ENCODE measurements at regions of chr7 and their contacts with region 1.

Region 1: GRCh38 chr7:73738612-73739374 is at the start of gene ABHD11:
- DNase-seq: peak; percentile 98
- H3K4me3 Mint-ChIP-seq: peak within 1 kb of the TSS; percentile 97
- H3K27ac Mint-ChIP-seq: peak within 1 kb of the TSS; percentile 90
- H3K4me1 Mint-ChIP-seq: peaks cover 14% of the 10 kb centered on the region
- H3K27me3 Mint-ChIP-seq: no peaks in the 10 kb centered on the region
- total RNA-seq, gene ABHD11: 9.4 to 11.3 TPM

Region 2: GRCh38 chr7:73522105-73522872 is 216.5 kb before region 1 on chr7 and contains the start of gene BAZ1B:
- CTCF ChIA-PET with region 1: interaction called, 3 read pairs
- intact Hi-C with region 1: loop called (anchors 1 kb)
- DNase-seq: peak; percentile 99
- H3K4me3 Mint-ChIP-seq: peak within 1 kb of the TSS; percentile 98
- H3K27ac Mint-ChIP-seq: peak within 1 kb of the TSS; percentile 96
- H3K4me1 Mint-ChIP-seq: peaks cover 55% of the 10 kb centered on the region
- H3K27me3 Mint-ChIP-seq: no peaks in the 10 kb centered on the region
- total RNA-seq, gene BAZ1B: 67.6 to 69.9 TPM

Region 3: DNA sequence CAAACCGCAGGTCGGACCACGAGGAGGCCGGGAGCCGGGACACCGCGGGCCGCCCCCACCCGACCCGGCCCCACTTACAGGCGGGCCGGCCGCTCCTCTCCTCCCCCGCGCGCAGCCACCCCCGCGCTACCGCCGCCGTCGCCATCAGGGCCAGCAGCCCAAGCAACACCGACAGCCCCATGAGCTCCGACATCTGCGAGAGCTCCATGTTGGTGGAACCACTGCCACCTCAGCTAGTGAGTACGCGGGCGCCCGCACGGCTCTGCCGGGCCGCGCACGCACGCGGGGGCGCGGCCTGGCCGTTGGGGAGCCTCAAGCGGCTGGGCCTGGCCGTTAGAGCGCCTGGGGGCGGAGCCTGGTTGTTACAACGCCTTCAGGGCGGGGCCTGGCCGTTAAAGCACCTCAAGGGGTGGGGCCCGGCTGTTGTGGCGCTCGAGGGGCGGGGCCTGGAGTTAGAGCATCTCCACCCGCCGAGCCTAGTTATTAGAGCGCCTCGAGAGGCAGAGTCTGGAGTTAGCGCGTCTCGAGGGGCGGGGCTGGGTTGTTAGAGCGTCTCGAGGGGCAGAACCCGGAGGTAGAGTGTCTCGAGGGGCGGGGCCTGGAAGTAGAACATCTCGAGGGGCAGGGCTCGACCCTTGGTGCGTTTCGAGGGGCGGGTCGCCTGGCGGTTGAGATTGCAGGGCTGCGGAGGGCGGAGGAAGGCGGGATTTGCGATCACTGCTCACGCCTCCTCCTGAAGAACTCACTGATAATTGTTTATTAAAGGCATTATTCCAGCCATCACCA is 160.3 kb before region 1 on chr7 and contains the start of gene TBL2:
- CTCF ChIA-PET with region 1: interaction called, 3 read pairs
- intact Hi-C with region 1: loop called (anchors 1 kb)
- DNase-seq: peak; percentile 99
- H3K4me3 Mint-ChIP-seq: peak within 1 kb of the TSS; percentile 87
- H3K27ac Mint-ChIP-seq: peak within 1 kb of the TSS; percentile 94
- H3K4me1 Mint-ChIP-seq: peaks cover 32% of the 10 kb centered on the region
- H3K27me3 Mint-ChIP-seq: no peaks in the 10 kb centered on the region
- total RNA-seq, gene TBL2: 21.5 to 23.6 TPM

Region 4: DNA sequence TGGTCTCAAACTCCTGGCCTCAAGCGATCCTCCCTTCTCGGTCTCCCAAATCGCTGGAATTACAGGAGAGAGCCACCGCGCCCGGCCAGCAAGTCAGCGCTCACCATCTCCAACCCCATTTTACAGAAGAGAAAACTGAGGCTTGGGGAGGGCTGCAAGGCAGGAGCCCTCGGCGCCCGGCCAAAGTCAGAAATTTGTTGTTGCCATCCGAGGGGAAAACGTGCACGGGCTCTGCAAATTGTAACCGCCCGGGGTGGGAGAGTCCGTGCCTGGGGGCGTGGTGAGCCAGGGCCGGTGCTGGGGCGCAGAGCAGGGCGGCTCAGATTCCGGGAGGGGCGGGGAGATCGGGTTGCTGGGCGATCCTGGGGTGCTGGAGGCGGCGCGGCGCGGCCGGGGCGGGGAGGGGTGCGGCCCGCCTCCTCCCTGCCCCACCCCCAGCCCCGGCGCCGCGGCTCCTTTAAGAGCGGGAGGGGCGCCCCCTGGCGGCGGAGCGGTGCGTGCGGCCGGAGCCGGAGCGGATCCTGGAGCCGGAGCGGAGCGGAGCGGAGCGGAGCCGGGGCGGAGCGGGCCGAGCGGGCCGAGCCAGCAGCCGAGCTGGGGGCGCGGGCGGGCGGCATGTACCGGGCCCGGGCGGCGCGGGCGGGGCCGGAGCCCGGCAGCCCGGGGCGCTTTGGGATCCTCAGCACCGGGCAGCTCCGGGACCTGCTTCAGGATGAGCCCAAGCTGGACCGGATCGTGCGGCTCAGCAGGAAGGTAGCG is 71.3 kb before region 1 on chr7 and contains the start of gene VPS37D:
- CTCF ChIA-PET with region 1: no interaction called
- intact Hi-C with region 1: loop called (anchors 1 kb)
- DNase-seq: peak; percentile 91
- H3K4me3 Mint-ChIP-seq: peak within 1 kb of the TSS; percentile 63
- H3K27ac Mint-ChIP-seq: no peak within 1 kb of the TSS
- H3K4me1 Mint-ChIP-seq: peaks cover 8% of the 10 kb centered on the region
- H3K27me3 Mint-ChIP-seq: peaks cover 34% of the 10 kb centered on the region
- total RNA-seq, gene VPS37D: not detected

Region 5: DNA sequence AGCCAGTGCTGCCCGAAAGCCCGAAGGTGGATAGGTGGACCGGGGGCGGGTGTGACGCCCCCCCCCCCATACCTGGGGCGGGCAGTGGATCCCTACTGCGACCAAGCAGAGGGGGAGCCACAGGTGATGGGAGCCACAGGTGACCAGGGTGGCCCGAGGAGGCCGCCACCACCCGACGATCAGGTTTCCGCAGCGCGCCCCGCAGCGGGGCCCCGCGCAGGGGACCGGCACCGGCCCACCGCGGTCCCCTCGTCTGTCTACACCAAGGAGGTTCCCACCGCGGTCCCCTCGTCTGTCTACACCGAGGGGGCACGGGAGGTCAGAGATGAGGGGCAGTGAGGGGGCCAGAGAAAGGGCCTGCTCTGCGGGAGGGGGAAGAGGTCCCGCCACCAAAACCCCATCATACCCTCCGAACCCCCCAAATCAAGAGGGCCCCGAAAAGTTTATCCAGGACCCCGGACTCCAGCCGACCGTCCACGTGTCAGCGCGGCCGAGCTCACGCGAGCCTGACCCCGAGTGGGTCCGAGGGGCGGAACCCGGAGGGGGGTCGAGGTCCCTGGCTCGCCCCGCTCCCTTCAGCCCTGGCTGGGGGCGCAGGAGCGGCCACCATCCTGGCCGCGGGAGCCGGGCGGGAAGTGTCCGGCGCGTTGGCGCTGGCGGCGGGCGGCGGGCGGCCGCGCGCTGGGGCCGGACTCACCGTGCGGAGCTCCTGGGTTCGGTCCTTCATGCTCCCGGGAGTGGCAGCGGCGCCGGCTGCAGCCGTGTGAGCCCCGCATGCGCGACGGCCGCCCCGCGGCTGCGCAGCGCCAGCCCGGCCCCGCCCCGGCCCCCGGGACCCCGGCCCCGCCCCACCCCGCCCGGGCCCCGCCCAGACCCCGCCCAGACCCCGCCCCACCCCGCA is 19.6 kb before region 1 on chr7 and contains the start of gene STX1A:
- CTCF ChIA-PET with region 1: interaction called, 4 read pairs
- intact Hi-C with region 1: loop called (anchors 1 kb)
- DNase-seq: peak; percentile 69
- H3K4me3 Mint-ChIP-seq: peak within 1 kb of the TSS; percentile 77
- H3K27ac Mint-ChIP-seq: no peak within 1 kb of the TSS
- H3K4me1 Mint-ChIP-seq: peaks cover 33% of the 10 kb centered on the region
- H3K27me3 Mint-ChIP-seq: peaks cover 2% of the 10 kb centered on the region
- total RNA-seq, gene STX1A: 23.7 to 24.1 TPM

Region 6: GRCh38 chr7:73761854-73762658 is 23.3 kb after region 1 on chr7:
- CTCF ChIA-PET with region 1: no interaction called
- intact Hi-C with region 1: no loop called
- DNase-seq: no peak
- H3K4me3 Mint-ChIP-seq: no peak overlapping the region
- H3K27ac Mint-ChIP-seq: no peak overlapping the region
- H3K4me1 Mint-ChIP-seq: no peaks in the 10 kb centered on the region
- H3K27me3 Mint-ChIP-seq: no peaks in the 10 kb centered on the region

Region 7: DNA sequence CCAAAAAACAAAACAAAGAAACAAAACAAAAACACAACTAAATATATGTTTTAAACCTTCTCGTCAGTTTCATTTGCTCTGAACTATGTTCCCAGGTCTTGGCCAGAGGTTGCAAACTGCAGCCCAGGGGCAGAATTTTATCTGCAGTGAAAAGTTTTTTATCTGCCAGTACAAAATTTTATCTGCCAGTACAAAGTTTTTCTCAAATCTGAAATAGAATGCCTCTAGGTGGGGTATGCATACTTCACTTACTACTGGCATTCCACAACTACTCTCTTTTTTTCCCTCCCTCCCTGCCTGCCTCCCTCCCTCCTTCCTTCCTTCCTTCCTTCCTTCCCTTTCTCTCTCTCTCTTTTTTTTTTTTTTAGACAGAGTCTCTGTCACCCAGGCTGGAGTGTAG is 40.7 kb after region 1 on chr7:
- CTCF ChIA-PET with region 1: no interaction called
- intact Hi-C with region 1: no loop called
- DNase-seq: no peak
- H3K4me3 Mint-ChIP-seq: no peak overlapping the region
- H3K27ac Mint-ChIP-seq: no peak overlapping the region
- H3K4me1 Mint-ChIP-seq: no peaks in the 10 kb centered on the region
- H3K27me3 Mint-ChIP-seq: peaks cover 4% of the 10 kb centered on the region

Region 8: DNA sequence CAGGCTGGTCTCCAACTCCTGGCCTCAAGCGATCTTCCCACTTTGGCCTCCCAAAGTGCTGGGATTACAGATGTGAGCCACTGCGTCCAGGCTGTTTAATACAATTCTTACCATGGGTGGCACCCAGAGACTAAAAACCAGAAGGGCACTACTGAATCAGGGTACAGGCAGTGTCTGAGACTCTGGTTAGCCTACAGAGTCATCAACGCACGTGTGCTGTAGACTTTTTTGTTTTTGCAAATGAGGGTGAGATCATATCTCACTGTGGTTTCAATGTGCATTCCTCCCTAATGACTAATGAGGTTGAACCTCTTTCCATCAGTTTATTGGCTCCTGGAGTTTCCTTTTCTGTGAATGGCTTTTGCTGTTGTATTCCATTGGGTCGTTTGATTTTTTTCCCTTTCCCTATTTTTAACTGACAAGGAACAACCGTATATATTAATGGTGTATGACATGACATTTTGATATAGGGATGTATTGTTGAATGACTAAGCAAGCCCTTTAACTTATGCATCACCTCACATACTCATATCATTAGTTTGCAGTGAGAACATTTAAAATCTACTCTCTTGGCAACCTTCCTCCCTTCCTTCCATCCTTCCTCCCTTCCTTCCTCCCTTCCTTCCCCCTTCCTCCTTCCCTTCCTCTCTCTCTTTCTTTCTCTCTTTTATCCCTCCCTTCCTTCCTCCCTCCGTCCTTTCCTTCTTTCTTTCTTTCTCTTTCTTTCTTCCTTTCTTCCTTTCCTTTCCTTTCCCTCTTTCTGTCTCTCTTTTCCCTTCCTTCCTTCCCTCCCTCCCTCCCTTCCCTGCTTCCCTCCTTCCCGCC is 112.8 kb after region 1 on chr7:
- CTCF ChIA-PET with region 1: interaction called, 6 read pairs
- intact Hi-C with region 1: loop called (anchors 1 kb)
- DNase-seq: peak; percentile 60
- H3K4me3 Mint-ChIP-seq: no peak overlapping the region
- H3K27ac Mint-ChIP-seq: peak overlapping the region; percentile 53
- H3K4me1 Mint-ChIP-seq: peaks cover 30% of the 10 kb centered on the region
- H3K27me3 Mint-ChIP-seq: peaks cover 14% of the 10 kb centered on the region

Region 9: GRCh38 chr7:73971704-73972341 is 233.0 kb after region 1 on chr7:
- CTCF ChIA-PET with region 1: no interaction called
- intact Hi-C with region 1: no loop called
- DNase-seq: no peak
- H3K4me3 Mint-ChIP-seq: no peak overlapping the region
- H3K27ac Mint-ChIP-seq: no peak overlapping the region
- H3K4me1 Mint-ChIP-seq: no peaks in the 10 kb centered on the region
- H3K27me3 Mint-ChIP-seq: no peaks in the 10 kb centered on the region

Region 10: GRCh38 chr7:74083117-74083876 is 344.5 kb after region 1 on chr7 and contains the start of gene LIMK1:
- CTCF ChIA-PET with region 1: no interaction called
- intact Hi-C with region 1: loop called (anchors 2 kb)
- DNase-seq: peak; percentile 80
- H3K4me3 Mint-ChIP-seq: peak within 1 kb of the TSS; percentile 78
- H3K27ac Mint-ChIP-seq: peak within 1 kb of the TSS; percentile 76
- H3K4me1 Mint-ChIP-seq: peaks cover 10% of the 10 kb centered on the region
- H3K27me3 Mint-ChIP-seq: no peaks in the 10 kb centered on the region
- total RNA-seq, gene LIMK1: 7.9 to 9.2 TPM

Measured in activated naive CD4-positive, alpha-beta T cell treated with anti-CD3 and anti-CD28 coated beads for 36 hours (primary cell).